ENCODE measurements at regions of chr1 and their contacts with region 1.

Region 1: DNA sequence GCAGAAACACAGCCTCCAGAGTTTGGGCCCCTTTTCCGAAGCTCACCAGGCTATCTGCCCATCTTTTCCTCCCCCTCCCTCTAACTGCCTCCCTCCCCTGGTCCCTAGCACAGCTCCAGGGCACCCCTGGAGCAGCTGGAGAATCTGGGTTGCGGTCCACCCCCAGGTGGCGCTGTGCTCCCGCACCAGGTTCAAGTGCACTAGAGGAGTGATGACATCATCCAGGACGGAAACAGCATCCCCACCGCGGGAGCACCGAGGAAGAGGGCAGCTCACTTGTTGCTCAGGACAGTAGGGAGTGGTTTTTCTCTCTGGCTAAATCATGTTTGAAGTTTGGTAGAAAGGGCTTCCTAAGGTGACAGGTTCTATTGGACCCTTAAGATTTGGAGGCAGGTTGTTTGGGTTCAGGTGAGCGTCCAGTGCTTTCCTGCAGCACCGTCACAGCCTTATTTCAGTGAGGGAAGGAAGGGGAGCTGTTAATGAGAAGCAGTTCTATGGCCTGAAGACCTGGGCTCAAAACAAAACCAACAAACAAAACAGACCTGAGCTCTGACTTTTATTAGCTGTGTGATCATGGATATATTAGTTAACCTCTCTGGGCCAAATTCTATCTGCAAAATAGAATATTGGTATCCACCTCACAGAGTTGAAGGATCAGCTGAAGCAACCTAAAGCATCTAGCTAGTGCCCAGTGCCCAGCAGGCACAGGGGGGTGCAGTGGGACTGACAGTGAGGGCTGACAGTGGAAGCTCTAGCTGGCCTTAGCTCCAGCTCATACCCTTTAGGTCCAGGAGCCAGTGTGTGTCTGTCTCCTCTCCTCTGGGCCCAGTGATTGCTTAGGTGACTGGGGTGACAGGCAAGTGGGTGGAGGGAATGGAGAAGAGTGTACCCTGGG is 7.5 kb downstream of the SHISA4 start:
- DNase-seq: peak; percentile 83
- ATAC-seq: peak; percentile 87
- H3K4me3 ChIP-seq: no peak overlapping the region
- H3K27ac ChIP-seq: no peak overlapping the region
- H3K4me1 ChIP-seq: peaks cover 13% of the 10 kb centered on the region; the same call in 1 of the 2 replicates
- H3K27me3 ChIP-seq: no peaks in the 10 kb centered on the region
- CTCF ChIP-seq: peak; percentile 92

Region 2: GRCh38 chr1:201933840-201934430 is 37.8 kb after region 1 on chr1:
- CTCF ChIA-PET with region 1: interaction called, 3 read pairs
- POLR2A ChIA-PET with region 1: no interaction called
- intact Hi-C with region 1: loop called (anchors 5 kb)
- DNase-seq: no peak
- ATAC-seq: no peak
- H3K4me3 ChIP-seq: no peak overlapping the region
- H3K27ac ChIP-seq: no peak overlapping the region
- H3K4me1 ChIP-seq: peaks cover 6% of the 10 kb centered on the region; the same call in 1 of the 2 replicates
- H3K27me3 ChIP-seq: no peaks in the 10 kb centered on the region
- CTCF ChIP-seq: no peak

Region 3: GRCh38 chr1:201964261-201964660 is 68.1 kb after region 1 on chr1:
- CTCF ChIA-PET with region 1: interaction called, 13 read pairs
- POLR2A ChIA-PET with region 1: no interaction called
- intact Hi-C with region 1: no loop called
- DNase-seq: no peak
- ATAC-seq: no peak
- H3K4me3 ChIP-seq: no peak overlapping the region
- H3K27ac ChIP-seq: no peak overlapping the region
- H3K4me1 ChIP-seq: no peaks in the 10 kb centered on the region
- H3K27me3 ChIP-seq: no peaks in the 10 kb centered on the region
- CTCF ChIP-seq: no peak

Region 4: GRCh38 chr1:201970334-201971159 is 74.4 kb after region 1 on chr1:
- CTCF ChIA-PET with region 1: interaction called, 12 read pairs
- POLR2A ChIA-PET with region 1: interaction called, 3 read pairs
- intact Hi-C with region 1: loop called (anchors 1 kb)
- DNase-seq: no peak
- ATAC-seq: no peak
- H3K4me3 ChIP-seq: no peak overlapping the region
- H3K27ac ChIP-seq: no peak overlapping the region
- H3K4me1 ChIP-seq: no peaks in the 10 kb centered on the region
- H3K27me3 ChIP-seq: no peaks in the 10 kb centered on the region
- CTCF ChIP-seq: no peak

Measured in PC-3 (cell line).